ENCODE measurements at regions of chr18 and their contacts with region 1.

Region 1: GRCh38 chr18:11310476-11311086 is 161.2 kb upstream of the PIEZO2 start:
- DNase-seq: no peak
- ATAC-seq: peak; percentile 93
- H3K4me3 ChIP-seq: no peak overlapping the region
- H3K27ac ChIP-seq: no peak overlapping the region
- H3K4me1 ChIP-seq: peaks cover 5% of the 10 kb centered on the region; the same call in 1 of the 2 replicates
- H3K27me3 ChIP-seq: peaks cover 0 to 4% of the 10 kb centered on the region in 2 experiments; a peak in 2 of 4 replicates
- CTCF ChIP-seq: peak; percentile 62 to 86 (median 83)
- EP300 ChIP-seq: no peak
- POLR2A ChIP-seq: no peak
- RAD21 ChIP-seq: peak; percentile 65

Region 2: DNA sequence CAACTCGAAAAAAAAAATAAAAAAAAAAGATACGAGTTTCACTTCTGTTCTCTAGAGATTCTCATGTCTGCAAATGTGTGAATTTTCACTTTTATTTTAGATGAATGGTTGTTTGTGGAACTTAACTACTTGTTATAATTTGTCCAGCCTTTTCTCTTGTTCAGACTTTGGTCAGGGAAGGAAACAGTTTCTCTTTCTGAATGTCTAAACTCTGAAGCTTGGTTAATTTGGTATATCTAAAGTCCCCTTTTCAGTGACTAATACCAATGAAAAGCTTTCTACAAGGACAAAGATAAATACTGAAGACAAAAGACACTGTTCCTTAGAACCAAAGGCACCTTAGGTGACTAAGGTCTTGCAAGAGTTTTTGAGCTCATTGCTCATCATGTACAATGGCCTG is 16.8 kb before region 1 on chr18:
- CTCF ChIA-PET with region 1: interaction called, 43 read pairs
- POLR2A ChIA-PET with region 1: interaction called, 3 read pairs
- RAD21 ChIA-PET with region 1: interaction called, 4 read pairs
- SMC1A ChIA-PET with region 1: interaction called, 11 read pairs
- in situ Hi-C with region 1: no loop called
- intact Hi-C with region 1: no loop called
- DNase-seq: peak; percentile 51
- ATAC-seq: peak; percentile 88
- H3K4me3 ChIP-seq: no peak overlapping the region
- H3K27ac ChIP-seq: peak overlapping the region; percentile 10; the same call in 1 of the 2 replicates
- H3K4me1 ChIP-seq: peaks cover 10% of the 10 kb centered on the region
- H3K27me3 ChIP-seq: no peaks in the 10 kb centered on the region
- CTCF ChIP-seq: no peak
- EP300 ChIP-seq: peak; percentile 24 to 59; a peak in 2 of 4 replicates
- POLR2A ChIP-seq: no peak
- RAD21 ChIP-seq: no peak

Region 3: DNA sequence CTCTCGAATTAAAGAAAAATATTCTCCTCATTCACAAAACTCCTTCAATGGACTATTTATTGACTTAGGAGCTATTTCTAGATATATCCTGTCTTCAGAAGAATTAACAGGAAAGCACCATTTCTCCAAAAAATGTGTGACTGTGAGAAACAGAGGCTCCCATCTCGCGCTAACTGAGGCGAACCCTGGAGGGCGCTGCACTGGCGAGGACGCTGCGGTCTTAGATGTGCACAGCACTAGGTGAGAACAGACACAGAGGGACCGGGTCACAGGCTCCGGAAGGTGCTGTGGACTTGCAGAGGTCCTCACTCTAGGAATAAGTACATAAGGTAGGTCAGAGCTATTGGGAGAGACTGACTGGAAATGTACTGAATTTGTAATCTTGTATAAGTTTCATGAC is 69.1 kb after region 1 on chr18:
- CTCF ChIA-PET with region 1: interaction called, 3 read pairs
- POLR2A ChIA-PET with region 1: no interaction called
- RAD21 ChIA-PET with region 1: interaction called, 3 read pairs
- SMC1A ChIA-PET with region 1: interaction called, 4 read pairs
- in situ Hi-C with region 1: no loop called
- intact Hi-C with region 1: loop called (anchors 5 kb)
- DNase-seq: no peak
- ATAC-seq: no peak
- H3K4me3 ChIP-seq: no peak overlapping the region
- H3K27ac ChIP-seq: no peak overlapping the region
- H3K4me1 ChIP-seq: no peaks in the 10 kb centered on the region
- H3K27me3 ChIP-seq: peaks cover 0 to 1% of the 10 kb centered on the region in 2 experiments; a peak in 3 of 4 replicates
- CTCF ChIP-seq: no peak
- EP300 ChIP-seq: no peak
- POLR2A ChIP-seq: no peak
- RAD21 ChIP-seq: no peak

Region 4: DNA sequence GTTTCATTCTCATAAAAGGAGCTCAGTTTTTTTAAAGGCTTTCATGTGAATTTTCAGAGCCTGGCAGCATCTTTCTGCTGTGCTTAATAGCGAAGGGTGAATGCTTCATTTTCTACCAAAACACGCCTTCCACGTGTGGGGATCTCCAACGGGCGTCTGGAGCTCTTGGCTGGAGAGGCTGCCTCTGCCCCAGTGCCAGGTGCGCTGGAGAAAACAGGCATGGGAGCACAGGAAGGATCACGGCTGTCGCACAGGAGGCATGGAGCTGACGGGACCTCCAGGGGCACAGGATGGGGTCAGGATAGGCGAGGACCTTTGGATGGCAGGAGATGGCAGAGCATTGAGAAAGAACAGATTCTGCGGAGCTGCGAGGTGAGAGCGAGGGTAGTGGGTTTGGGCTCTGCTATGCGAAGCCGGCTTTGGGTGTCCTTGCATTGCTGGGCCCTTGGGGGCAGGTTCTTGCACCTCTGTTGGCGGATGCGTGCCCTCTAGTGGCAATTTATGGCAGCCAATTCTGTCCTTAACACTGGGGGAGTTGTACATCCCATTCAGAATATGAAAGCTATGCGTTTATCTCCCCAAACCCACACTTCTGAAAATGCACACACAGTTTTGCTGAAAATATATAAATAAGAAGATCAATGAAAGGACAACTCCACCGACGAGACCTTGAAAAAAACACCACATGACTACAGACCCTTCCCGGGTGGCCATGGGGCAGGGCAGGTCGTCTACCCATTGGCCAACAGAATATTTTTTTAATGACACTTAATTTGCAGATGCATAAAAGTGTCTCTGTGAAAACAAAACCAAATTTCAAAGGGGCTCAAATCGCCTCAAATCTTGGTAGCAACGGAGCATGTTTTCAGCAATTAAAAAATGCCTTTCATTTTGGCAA is 208.5 kb after region 1 on chr18:
- CTCF ChIA-PET with region 1: interaction called, 65 read pairs
- POLR2A ChIA-PET with region 1: no interaction called
- RAD21 ChIA-PET with region 1: interaction called, 14 read pairs
- SMC1A ChIA-PET with region 1: interaction called, 11 read pairs
- in situ Hi-C with region 1: no loop called
- intact Hi-C with region 1: loop called (anchors 1 kb)
- DNase-seq: no peak
- ATAC-seq: peak; percentile 100
- H3K4me3 ChIP-seq: no peak overlapping the region
- H3K27ac ChIP-seq: no peak overlapping the region
- H3K4me1 ChIP-seq: no peaks in the 10 kb centered on the region
- H3K27me3 ChIP-seq: peaks cover 0 to 2% of the 10 kb centered on the region in 2 experiments; a peak in 2 of 4 replicates
- CTCF ChIP-seq: peak; percentile 83 to 97 (median 92)
- EP300 ChIP-seq: no peak
- POLR2A ChIP-seq: no peak
- RAD21 ChIP-seq: peak; percentile 83

Measured in GM12878 (cell line).